ENCODE measurements at regions of chr16 and their contacts with region 1.

Region 1: DNA sequence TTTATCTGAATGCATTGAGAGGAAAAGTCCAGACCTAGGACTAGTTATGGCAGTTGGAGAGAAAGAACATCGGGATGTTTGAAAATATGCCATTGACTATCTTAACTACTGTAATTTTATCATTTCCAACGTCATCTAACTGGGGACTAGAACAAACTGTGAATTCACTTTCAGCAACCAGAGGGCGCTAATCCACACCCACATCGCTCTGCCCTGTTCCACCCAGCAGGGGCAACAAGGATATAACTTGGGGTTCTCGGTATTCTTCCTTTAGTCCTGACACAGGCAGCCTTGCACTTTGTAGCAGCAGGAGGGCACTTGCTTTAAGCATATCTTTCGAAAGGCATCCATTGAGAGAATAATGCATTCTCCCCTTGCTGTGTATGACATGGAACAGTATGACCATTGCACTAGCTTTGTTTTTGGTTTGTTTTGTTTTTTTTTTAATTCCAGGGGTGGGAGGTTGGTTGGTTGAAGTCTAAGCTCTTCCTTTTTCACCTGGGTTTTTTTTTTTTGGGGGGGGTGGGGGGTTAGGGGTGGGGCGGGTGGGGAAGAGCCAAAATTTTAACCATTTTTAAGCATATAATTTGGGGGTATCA is 31.5 kb downstream of the SIAH1 start:
- DNase-seq: peak; percentile 51
- ATAC-seq: peak; percentile 92
- H3K4me3 ChIP-seq: no peak overlapping the region
- H3K27ac ChIP-seq: no peak overlapping the region
- H3K4me1 ChIP-seq: no peaks in the 10 kb centered on the region; a peak in 1 of 4 replicates
- H3K27me3 ChIP-seq: no peaks in the 10 kb centered on the region
- CTCF ChIP-seq: peak; percentile 90 to 97 (median 92)
- POLR2A ChIP-seq: no peak
- RAD21 ChIP-seq: peak; percentile 79

Region 2: GRCh38 chr16:48365581-48366164 is 12.0 kb after region 1 on chr16:
- CTCF ChIA-PET with region 1: interaction called, 15 read pairs
- POLR2A ChIA-PET with region 1: interaction called, 3 read pairs
- RAD21 ChIA-PET with region 1: no interaction called
- intact Hi-C with region 1: no loop called
- DNase-seq: peak; percentile 77
- ATAC-seq: peak; percentile 100
- H3K4me3 ChIP-seq: peak overlapping the region; percentile 51 to 64
- H3K27ac ChIP-seq: peak overlapping the region; percentile 51
- H3K4me1 ChIP-seq: peaks cover 25 to 31% of the 10 kb centered on the region in 2 experiments
- H3K27me3 ChIP-seq: no peaks in the 10 kb centered on the region
- CTCF ChIP-seq: no peak
- POLR2A ChIP-seq: peak; percentile 55
- RAD21 ChIP-seq: no peak

Region 3: DNA sequence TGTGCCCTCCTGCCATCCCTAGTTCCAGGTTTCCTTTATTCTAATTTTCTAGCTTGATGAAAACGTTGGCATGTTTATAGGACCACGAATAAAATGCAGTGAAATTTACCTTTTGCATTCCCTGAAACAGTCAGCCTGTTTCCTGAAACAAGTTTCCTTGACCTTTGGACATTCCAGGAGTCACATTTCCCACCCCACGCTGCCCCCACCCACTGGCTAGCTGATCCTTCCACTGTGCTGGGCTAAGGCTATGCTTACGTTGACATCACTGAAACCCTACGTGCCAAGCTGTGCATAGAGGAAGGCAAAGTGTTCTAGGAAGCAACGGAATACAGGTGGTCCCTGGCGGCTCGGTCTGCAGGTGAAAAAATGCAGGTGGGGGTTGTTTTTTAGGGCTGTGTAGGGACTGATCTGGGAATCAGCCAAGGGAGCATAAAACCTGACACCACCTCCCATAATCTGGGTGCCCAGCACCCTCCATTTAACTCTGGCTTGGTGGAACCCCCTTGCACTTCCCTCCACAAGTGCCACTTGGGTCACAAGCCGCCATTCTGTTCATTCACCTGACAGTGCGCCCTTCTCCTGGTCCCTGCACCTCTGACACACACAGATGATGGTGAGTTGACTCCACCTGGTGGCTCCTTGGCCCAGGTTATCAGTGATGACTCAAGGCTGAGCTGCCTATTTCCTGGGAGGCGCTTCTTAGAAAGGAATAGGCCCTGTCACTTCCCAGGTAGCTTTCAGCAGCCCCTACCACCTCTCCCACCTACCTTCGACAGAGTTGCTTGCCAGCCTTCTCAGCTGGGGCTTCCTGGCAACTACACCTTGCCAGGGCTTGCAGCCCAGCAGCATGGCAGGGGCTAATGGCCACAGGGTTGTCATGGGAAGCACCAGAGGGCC is 172.6 kb after region 1 on chr16:
- CTCF ChIA-PET with region 1: interaction called, 35 read pairs
- POLR2A ChIA-PET with region 1: interaction called, 3 read pairs
- RAD21 ChIA-PET with region 1: interaction called, 5 to 6 read pairs
- intact Hi-C with region 1: loop called (anchors 1 kb)
- DNase-seq: peak; percentile 66
- ATAC-seq: peak; percentile 96
- H3K4me3 ChIP-seq: no peak overlapping the region
- H3K27ac ChIP-seq: no peak overlapping the region
- H3K4me1 ChIP-seq: peaks cover 0 to 26% of the 10 kb centered on the region in 2 experiments; a peak in 2 of 4 replicates
- H3K27me3 ChIP-seq: no peaks in the 10 kb centered on the region
- CTCF ChIP-seq: peak; percentile 63 to 87 (median 66)
- POLR2A ChIP-seq: no peak
- RAD21 ChIP-seq: peak; percentile 97

Region 4: DNA sequence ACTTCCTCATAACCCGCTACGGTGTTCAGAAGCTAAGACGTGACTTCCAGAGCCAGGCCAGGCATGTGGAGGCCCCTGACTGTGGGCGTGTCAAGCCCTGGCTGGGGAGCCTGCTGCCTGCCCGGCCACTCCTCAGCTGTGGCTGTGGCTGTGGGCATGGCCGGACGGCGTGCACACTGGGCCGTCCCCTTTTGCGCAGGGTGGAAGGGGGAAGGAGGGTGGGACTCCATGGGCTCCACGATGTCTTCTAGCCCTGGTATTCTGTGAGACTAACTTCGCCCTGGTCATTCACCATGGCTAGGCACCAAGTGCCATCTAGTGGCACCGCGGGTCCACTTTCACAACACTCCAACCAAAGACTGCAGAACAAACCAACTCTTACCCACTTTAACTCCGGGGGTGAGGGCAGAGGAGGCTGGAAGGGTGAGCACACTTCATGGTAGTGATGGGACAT is 188.4 kb after region 1 on chr16:
- CTCF ChIA-PET with region 1: no interaction called
- POLR2A ChIA-PET with region 1: interaction called, 3 read pairs
- RAD21 ChIA-PET with region 1: no interaction called
- intact Hi-C with region 1: loop called (anchors 1 kb)
- DNase-seq: no peak
- ATAC-seq: peak; percentile 86
- H3K4me3 ChIP-seq: no peak overlapping the region
- H3K27ac ChIP-seq: no peak overlapping the region
- H3K4me1 ChIP-seq: no peaks in the 10 kb centered on the region
- H3K27me3 ChIP-seq: no peaks in the 10 kb centered on the region
- CTCF ChIP-seq: peak in 2 of 3 experiments; percentile 49 to 57; a peak in 5 of 6 replicates
- POLR2A ChIP-seq: no peak
- RAD21 ChIP-seq: peak; percentile 64

Measured in HCT116 (cell line).